Calu3 (cell line): ENCODE measurements at regions of chr21 and their contacts with region 1.

Region 1: GRCh38 chr21:39125752-39126485 is 57.3 kb downstream of the PSMG1 start:
- DNase-seq: peak; percentile 44
- H3K4me3 Mint-ChIP-seq: no peak overlapping the region
- H3K27ac Mint-ChIP-seq: no peak overlapping the region
- H3K4me1 Mint-ChIP-seq: no peaks in the 10 kb centered on the region
- H3K27me3 Mint-ChIP-seq: no peaks in the 10 kb centered on the region
- CTCF ChIP-seq: peak; percentile 24

Region 2: DNA sequence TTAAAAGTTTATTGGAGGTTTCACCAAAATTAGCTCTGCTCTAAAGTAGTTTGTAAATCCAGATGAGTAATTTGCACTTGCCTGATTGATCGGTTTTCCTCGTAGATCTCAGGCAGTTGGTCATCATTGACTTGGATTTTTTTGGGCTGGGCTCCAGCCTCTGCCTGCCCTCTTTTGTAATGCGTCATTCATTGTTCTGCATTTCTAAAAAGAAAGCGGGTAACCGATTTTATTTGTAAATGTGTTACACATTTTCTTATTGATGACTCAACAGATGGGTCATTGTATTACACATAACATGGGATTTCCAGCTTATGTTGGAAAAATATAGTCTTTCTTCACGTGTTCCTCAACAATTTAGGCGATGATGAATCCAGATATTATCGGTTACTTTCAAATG is 314.7 kb before region 1 on chr21:
- CTCF ChIA-PET with region 1: no interaction called
- intact Hi-C with region 1: loop called (anchors 5 kb)
- DNase-seq: peak; percentile 46
- H3K4me3 Mint-ChIP-seq: peak overlapping the region; percentile 34
- H3K27ac Mint-ChIP-seq: peak overlapping the region; percentile 78
- H3K4me1 Mint-ChIP-seq: peaks cover 39% of the 10 kb centered on the region
- H3K27me3 Mint-ChIP-seq: no peaks in the 10 kb centered on the region
- CTCF ChIP-seq: no peak

Region 3: GRCh38 chr21:40457741-40458140 is 1331.8 kb after region 1 on chr21:
- CTCF ChIA-PET with region 1: no interaction called
- intact Hi-C with region 1: no loop called
- DNase-seq: no peak
- H3K4me3 Mint-ChIP-seq: no peak overlapping the region
- H3K27ac Mint-ChIP-seq: no peak overlapping the region
- H3K4me1 Mint-ChIP-seq: no peaks in the 10 kb centered on the region
- H3K27me3 Mint-ChIP-seq: no peaks in the 10 kb centered on the region
- CTCF ChIP-seq: no peak